ENCODE measurements at regions of chr17 and their contacts with region 1.

Region 1: GRCh38 chr17:49779739-49780231 is 8.7 kb upstream of the KAT7 start:
- DNase-seq: no peak
- ATAC-seq: peak; percentile 66

Region 2: GRCh38 chr17:49707608-49708514 is 71.9 kb before region 1 on chr17 and contains the start of gene SLC35B1:
- intact Hi-C with region 1: loop called (anchors 5 kb)
- DNase-seq: peak; percentile 100
- ATAC-seq: peak; percentile 99
- total RNA-seq, gene SLC35B1: 53.3 TPM

Measured in Right ventricle myocardium superior (tissue), 1 donor.